ENCODE measurements at regions of chr10 and their contacts with region 1.

Region 1: GRCh38 chr10:24197263-24197662 is 11.7 kb upstream of the KIAA1217 start:
- DNase-seq: no peak

Region 2: DNA sequence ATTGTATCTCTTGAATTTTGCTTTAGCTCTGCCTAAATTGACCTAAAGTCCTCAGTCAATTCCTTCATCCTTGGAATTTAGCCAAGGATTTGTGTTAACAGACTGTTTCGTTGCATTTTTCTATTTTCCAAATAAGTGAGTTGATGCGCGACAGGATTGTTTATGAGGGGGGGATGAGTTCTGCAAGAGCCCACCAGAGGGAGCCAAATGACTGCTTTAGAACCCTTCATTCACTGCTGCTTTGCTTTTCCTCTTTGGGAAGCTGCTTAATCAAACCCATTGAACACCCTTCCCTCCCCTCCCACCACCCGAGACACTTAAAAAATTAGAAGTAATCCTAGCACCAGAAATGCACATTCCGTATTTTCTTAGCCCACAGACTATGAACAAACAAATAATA is 1038.9 kb before region 1 on chr10:
- intact Hi-C with region 1: loop called (anchors 10 kb)
- DNase-seq: peak in 6 of 10 donors; percentile 48 to 87 (median 58)

Region 3: GRCh38 chr10:23516530-23516929 is 680.7 kb before region 1 on chr10:
- intact Hi-C with region 1: loop called (anchors 10 kb)
- DNase-seq: no peak

Region 4: GRCh38 chr10:23975431-23975830 is 221.8 kb before region 1 on chr10:
- intact Hi-C with region 1: no loop called
- DNase-seq: no peak

Region 5: DNA sequence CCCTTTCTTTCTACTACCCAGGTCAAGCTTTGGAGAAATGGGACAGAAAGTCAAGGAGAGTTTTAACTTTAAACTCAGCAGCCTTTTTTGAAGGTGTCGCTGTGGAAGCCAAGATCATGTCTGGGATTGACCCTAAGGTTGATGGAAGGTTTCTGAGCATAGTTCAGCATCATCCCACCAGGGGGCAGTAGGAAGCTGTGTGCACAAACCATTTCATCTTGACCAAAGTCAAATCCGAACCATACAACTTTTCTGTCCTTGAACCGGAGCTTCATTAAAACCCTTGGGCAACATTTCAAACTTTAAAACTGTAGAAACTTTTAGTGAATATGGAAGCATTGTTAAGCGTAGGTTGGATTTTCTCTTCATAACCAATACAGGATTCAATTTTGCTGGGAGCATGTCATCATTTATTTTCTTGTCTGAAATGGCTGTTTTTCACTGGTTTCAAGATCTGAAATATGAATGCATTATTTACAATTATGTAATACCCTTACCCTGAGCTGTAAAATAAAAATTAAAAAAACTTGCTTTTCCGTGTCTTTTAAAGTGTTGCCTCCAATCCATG is 202.7 kb before region 1 on chr10:
- intact Hi-C with region 1: loop called (anchors 2 kb)
- DNase-seq: peak in 5 of 10 donors; percentile 18 to 63 (median 50)

Region 6: GRCh38 chr10:24041834-24042233 is 155.4 kb before region 1 on chr10:
- intact Hi-C with region 1: no loop called
- DNase-seq: no peak